K562 (cell line): ENCODE measurements at regions of chr3 and their contacts with region 1.

Region 1: GRCh38 chr3:150495563-150496168 is 50.6 kb downstream of the SERP1 start:
- DNase-seq: peak; percentile 44 to 72 (median 50)
- ATAC-seq: peak; percentile 81
- H3K4me3 ChIP-seq: no peak overlapping the region
- H3K27ac ChIP-seq: peak overlapping the region; percentile 70; the same call in 1 of the 3 replicates
- H3K4me1 ChIP-seq: peaks cover 0 to 26% of the 10 kb centered on the region in 2 experiments; a peak in 4 of 5 replicates
- H3K27me3 ChIP-seq: no peaks in the 10 kb centered on the region
- CTCF ChIP-seq: peak; percentile 45 to 82 (median 64); a peak in 5 of 6 replicates
- EP300 ChIP-seq: no peak
- POLR2A ChIP-seq: no peak
- RAD21 ChIP-seq: peak; percentile 95 to 96

Region 2: DNA sequence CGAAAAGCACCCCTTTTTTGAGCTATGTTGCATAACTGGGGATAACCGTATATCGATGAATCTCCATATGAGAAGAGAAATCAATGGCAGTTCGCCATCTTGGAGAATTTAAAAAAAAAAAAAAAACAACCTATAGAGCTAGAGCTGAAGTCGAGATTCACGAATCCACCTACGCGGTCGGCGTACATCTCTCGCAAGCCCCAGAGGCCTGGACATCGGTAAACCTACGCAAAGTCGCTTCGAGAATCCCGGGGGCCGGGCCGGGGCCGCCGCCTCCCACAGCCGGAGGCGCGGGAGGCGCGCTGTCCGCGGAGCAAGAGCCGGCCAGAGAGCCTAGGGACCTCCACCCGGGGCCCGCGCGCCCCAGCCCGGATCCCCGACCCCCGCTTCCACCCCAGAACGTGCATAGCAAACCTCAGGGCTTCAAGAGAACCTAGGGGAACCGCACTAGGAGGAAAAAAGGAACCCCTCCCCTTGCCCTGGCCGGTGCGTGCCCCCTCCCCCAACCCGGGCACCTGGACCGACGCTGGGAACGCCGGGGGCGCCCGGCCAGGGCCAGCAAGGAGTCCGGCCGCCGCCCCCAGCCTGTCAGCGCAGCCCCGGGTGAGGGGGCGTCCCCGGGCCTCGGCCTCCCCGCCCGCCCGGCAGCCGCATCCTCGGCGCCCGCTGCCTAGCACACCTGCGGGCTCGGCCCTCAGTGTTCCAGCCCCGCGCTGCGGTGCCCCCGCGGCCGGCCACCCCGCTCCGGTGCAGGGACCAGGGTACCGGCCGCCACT is 525.5 kb before region 1 on chr3:
- CTCF ChIA-PET with region 1: interaction called, 5 read pairs
- POLR2A ChIA-PET with region 1: no interaction called
- in situ Hi-C with region 1: loop called (anchors 25 kb)
- intact Hi-C with region 1: loop called (anchors 1 kb)
- DNase-seq: peak in 2 of 4 experiments; percentile 9 to 14
- ATAC-seq: no peak
- H3K4me3 ChIP-seq: peak overlapping the region; percentile 45
- H3K27ac ChIP-seq: no peak overlapping the region
- H3K4me1 ChIP-seq: peaks cover 0 to 18% of the 10 kb centered on the region in 2 experiments; a peak in 3 of 5 replicates
- H3K27me3 ChIP-seq: peaks cover 6 to 13% of the 10 kb centered on the region in 2 experiments; a peak in 3 of 5 replicates
- CTCF ChIP-seq: no peak
- EP300 ChIP-seq: no peak
- POLR2A ChIP-seq: no peak
- RAD21 ChIP-seq: no peak

Region 3: DNA sequence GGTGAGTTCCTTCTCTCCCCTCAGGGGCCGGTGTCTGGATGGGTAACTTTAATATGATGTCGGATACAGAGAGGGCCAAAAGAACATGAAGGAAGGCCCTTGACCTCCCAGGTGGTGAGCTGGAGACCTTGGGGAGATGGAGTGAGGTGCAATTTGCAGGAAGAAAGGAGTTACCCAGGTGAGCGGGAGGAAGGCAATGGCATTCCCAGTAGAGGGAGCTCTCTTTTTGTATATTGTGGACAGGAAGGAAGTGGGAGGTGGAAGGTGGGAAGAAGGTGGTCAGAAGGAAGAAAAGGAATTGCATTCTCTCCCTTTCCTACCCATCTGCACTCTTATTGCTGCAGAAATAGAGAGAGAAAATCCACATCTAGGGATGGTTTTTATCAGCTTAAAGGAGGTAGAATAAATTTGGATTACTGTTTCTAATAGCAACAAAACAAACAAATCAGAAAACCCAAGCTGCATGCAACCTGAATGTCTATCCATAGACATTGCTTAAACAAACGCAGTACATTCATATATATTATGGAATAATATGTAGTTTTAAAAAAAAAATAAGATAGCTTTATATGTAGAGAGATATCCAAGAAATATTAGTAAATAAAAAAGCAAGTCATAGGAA is 256.6 kb before region 1 on chr3:
- CTCF ChIA-PET with region 1: interaction called, 17 read pairs
- POLR2A ChIA-PET with region 1: no interaction called
- in situ Hi-C with region 1: no loop called
- intact Hi-C with region 1: loop called (anchors 1 kb)
- DNase-seq: peak in 2 of 4 experiments; percentile 22 to 49
- ATAC-seq: peak; percentile 75
- H3K4me3 ChIP-seq: no peak overlapping the region
- H3K27ac ChIP-seq: no peak overlapping the region
- H3K4me1 ChIP-seq: no peaks in the 10 kb centered on the region
- H3K27me3 ChIP-seq: no peaks in the 10 kb centered on the region
- CTCF ChIP-seq: peak; percentile 28 to 67 (median 62); a peak in 3 of 6 replicates
- EP300 ChIP-seq: no peak
- POLR2A ChIP-seq: no peak
- RAD21 ChIP-seq: peak; percentile 61 to 81

Region 4: GRCh38 chr3:150371741-150372254 is 123.9 kb before region 1 on chr3:
- CTCF ChIA-PET with region 1: interaction called, 3 read pairs
- POLR2A ChIA-PET with region 1: no interaction called
- in situ Hi-C with region 1: no loop called
- intact Hi-C with region 1: loop called (anchors 5 kb)
- DNase-seq: peak; percentile 15 to 76 (median 42)
- ATAC-seq: peak; percentile 83
- H3K4me3 ChIP-seq: no peak overlapping the region
- H3K27ac ChIP-seq: peak overlapping the region; percentile 31; the same call in 1 of the 3 replicates
- H3K4me1 ChIP-seq: peaks cover 0 to 19% of the 10 kb centered on the region in 2 experiments; a peak in 3 of 5 replicates
- H3K27me3 ChIP-seq: no peaks in the 10 kb centered on the region
- CTCF ChIP-seq: no peak
- EP300 ChIP-seq: peak; percentile 23; the same call in 1 of the 2 replicates
- POLR2A ChIP-seq: no peak
- RAD21 ChIP-seq: no peak

Region 5: DNA sequence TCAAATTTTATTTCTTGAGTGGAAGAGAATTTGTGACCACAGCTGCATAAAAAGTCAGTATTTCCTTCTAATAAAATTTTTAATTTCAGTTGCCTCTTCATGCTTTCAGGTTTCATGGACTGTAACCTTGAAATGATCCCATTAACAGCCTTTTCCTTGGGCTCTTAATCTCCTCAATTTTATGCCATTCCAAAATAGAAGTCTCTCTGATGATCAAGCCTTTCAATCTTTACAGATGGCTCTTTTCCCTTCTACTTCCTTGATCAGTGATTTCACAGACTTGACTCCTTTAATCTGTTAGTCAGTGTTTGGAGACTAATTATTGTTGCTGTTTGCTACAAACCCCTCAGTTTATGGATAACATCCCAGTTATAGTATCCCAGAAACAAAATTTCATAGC is 75.7 kb before region 1 on chr3:
- CTCF ChIA-PET with region 1: no interaction called
- POLR2A ChIA-PET with region 1: no interaction called
- in situ Hi-C with region 1: no loop called
- intact Hi-C with region 1: no loop called
- DNase-seq: no peak
- ATAC-seq: no peak
- H3K4me3 ChIP-seq: no peak overlapping the region
- H3K27ac ChIP-seq: no peak overlapping the region
- H3K4me1 ChIP-seq: peaks cover 2 to 32% of the 10 kb centered on the region in 2 experiments; a peak in 4 of 5 replicates
- H3K27me3 ChIP-seq: no peaks in the 10 kb centered on the region
- CTCF ChIP-seq: no peak
- EP300 ChIP-seq: no peak
- POLR2A ChIP-seq: no peak
- RAD21 ChIP-seq: no peak

Region 6: GRCh38 chr3:150721285-150722130 is 225.8 kb after region 1 on chr3:
- CTCF ChIA-PET with region 1: no interaction called
- POLR2A ChIA-PET with region 1: no interaction called
- in situ Hi-C with region 1: no loop called
- intact Hi-C with region 1: no loop called
- DNase-seq: peak; percentile 71 to 76 (median 71)
- ATAC-seq: peak; percentile 76
- H3K4me3 ChIP-seq: no peak overlapping the region
- H3K27ac ChIP-seq: no peak overlapping the region
- H3K4me1 ChIP-seq: peaks cover 9 to 15% of the 10 kb centered on the region in 2 experiments; a peak in 4 of 5 replicates
- H3K27me3 ChIP-seq: no peaks in the 10 kb centered on the region
- CTCF ChIP-seq: peak; percentile 72 to 92 (median 74); a peak in 5 of 6 replicates
- EP300 ChIP-seq: no peak
- POLR2A ChIP-seq: no peak
- RAD21 ChIP-seq: peak; percentile 90 to 98

Region 7: GRCh38 chr3:150870396-150870795 is 374.7 kb after region 1 on chr3:
- CTCF ChIA-PET with region 1: no interaction called
- POLR2A ChIA-PET with region 1: no interaction called
- in situ Hi-C with region 1: no loop called
- intact Hi-C with region 1: no loop called
- DNase-seq: no peak
- ATAC-seq: no peak
- H3K4me3 ChIP-seq: no peak overlapping the region
- H3K27ac ChIP-seq: no peak overlapping the region
- H3K4me1 ChIP-seq: no peaks in the 10 kb centered on the region
- H3K27me3 ChIP-seq: peaks cover 2 to 10% of the 10 kb centered on the region in 2 experiments; a peak in 2 of 5 replicates
- CTCF ChIP-seq: no peak
- EP300 ChIP-seq: no peak
- POLR2A ChIP-seq: no peak
- RAD21 ChIP-seq: no peak